GM12878 (cell line): ENCODE measurements at regions of chr15 and their contacts with region 1.

Region 1: GRCh38 chr15:84981054-84981710 is 474 bp upstream of the PDE8A start:
- DNase-seq: peak; percentile 87
- ATAC-seq: peak; percentile 79
- H3K4me3 ChIP-seq: peak overlapping the region; percentile 94
- H3K27ac ChIP-seq: peak overlapping the region; percentile 92
- H3K4me1 ChIP-seq: peaks cover 9% of the 10 kb centered on the region
- H3K27me3 ChIP-seq: no peaks in the 10 kb centered on the region
- CTCF ChIP-seq: no peak
- EP300 ChIP-seq: peak; percentile 58 to 65; a peak in 1 of 4 replicates
- POLR2A ChIP-seq: peak; percentile 77
- RAD21 ChIP-seq: no peak

Region 2: GRCh38 chr15:84947947-84948830 is 33.0 kb before region 1 on chr15:
- CTCF ChIA-PET with region 1: no interaction called
- POLR2A ChIA-PET with region 1: no interaction called
- RAD21 ChIA-PET with region 1: no interaction called
- SMC1A ChIA-PET with region 1: no interaction called
- in situ Hi-C with region 1: no loop called
- intact Hi-C with region 1: no loop called
- DNase-seq: no peak
- ATAC-seq: no peak
- H3K4me3 ChIP-seq: no peak overlapping the region
- H3K27ac ChIP-seq: no peak overlapping the region
- H3K4me1 ChIP-seq: no peaks in the 10 kb centered on the region
- H3K27me3 ChIP-seq: no peaks in the 10 kb centered on the region
- CTCF ChIP-seq: no peak
- EP300 ChIP-seq: no peak
- POLR2A ChIP-seq: no peak
- RAD21 ChIP-seq: no peak

Region 3: DNA sequence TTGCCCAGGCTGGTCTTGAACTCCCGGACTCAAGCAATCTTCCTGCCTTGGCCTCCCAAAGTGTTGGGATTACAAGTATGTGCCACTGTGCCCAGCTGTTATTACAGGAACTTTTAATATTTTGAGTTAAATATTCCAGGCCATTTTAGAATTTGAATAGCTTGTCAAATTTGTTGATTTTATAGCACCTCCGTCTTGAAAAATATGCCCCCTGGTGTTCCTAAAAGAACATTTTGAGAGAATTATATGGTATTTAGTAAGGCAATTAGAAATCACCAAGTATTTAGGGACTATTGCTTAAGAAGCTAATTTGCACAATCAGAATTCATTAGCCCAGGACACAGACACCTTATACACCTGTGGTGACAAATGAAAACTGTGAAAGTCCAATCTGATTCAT is 24.1 kb after region 1 on chr15:
- CTCF ChIA-PET with region 1: interaction called, 4 read pairs
- POLR2A ChIA-PET with region 1: interaction called, 12 read pairs
- RAD21 ChIA-PET with region 1: interaction called, 6 read pairs
- SMC1A ChIA-PET with region 1: interaction called, 13 read pairs
- in situ Hi-C with region 1: no loop called
- intact Hi-C with region 1: no loop called
- DNase-seq: no peak
- ATAC-seq: no peak
- H3K4me3 ChIP-seq: no peak overlapping the region
- H3K27ac ChIP-seq: no peak overlapping the region
- H3K4me1 ChIP-seq: peaks cover 47% of the 10 kb centered on the region
- H3K27me3 ChIP-seq: no peaks in the 10 kb centered on the region
- CTCF ChIP-seq: no peak
- EP300 ChIP-seq: no peak
- POLR2A ChIP-seq: no peak
- RAD21 ChIP-seq: no peak

Region 4: DNA sequence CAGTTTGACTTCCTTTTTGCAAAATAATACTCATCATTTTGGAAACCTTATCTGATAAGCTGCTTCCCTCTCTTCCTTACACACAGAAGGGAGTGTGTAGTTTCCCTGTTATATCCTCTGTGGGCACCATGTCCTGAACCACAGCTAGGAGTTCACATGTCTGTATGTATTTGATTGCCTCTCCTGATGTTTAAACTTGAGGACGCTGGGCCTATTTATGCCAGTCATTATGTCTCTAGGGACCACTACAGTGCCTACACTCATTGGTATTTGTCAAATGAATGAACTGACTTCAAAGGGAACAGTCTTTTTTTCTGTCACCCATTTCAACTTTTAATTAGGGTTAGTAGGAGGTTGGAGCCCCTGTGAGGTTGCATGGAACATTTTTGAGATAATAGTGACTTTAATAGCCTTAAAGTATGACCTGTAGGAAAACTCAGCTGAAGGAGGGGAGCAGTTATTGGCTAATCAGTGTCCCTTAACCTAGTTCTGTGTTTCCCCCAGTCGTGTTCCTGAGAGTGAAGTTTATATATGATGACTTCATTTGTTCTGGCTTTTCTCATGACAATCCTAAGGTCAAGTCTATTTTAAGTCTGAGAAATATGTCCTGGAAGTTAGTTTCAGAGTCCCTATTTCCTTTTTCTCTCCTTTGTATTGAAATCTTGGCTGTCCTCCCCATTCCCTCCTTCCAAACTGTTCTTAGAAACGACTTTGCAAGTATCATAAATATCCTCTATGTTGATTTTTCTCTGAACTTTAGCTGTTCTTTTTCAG is 29.4 kb after region 1 on chr15:
- CTCF ChIA-PET with region 1: interaction called, 4 read pairs
- POLR2A ChIA-PET with region 1: interaction called, 12 read pairs
- RAD21 ChIA-PET with region 1: interaction called, 6 read pairs
- SMC1A ChIA-PET with region 1: interaction called, 17 read pairs
- in situ Hi-C with region 1: no loop called
- intact Hi-C with region 1: no loop called
- DNase-seq: no peak
- ATAC-seq: peak; percentile 70
- H3K4me3 ChIP-seq: no peak overlapping the region
- H3K27ac ChIP-seq: peak overlapping the region; percentile 56
- H3K4me1 ChIP-seq: peaks cover 50% of the 10 kb centered on the region
- H3K27me3 ChIP-seq: no peaks in the 10 kb centered on the region
- CTCF ChIP-seq: no peak
- EP300 ChIP-seq: no peak
- POLR2A ChIP-seq: no peak
- RAD21 ChIP-seq: no peak

Region 5: GRCh38 chr15:85024509-85025214 is 43.5 kb after region 1 on chr15:
- CTCF ChIA-PET with region 1: interaction called, 3 read pairs
- POLR2A ChIA-PET with region 1: interaction called, 4 read pairs
- RAD21 ChIA-PET with region 1: interaction called, 7 read pairs
- SMC1A ChIA-PET with region 1: interaction called, 26 read pairs
- in situ Hi-C with region 1: no loop called
- intact Hi-C with region 1: loop called (anchors 2 kb)
- DNase-seq: no peak
- ATAC-seq: peak; percentile 79
- H3K4me3 ChIP-seq: no peak overlapping the region
- H3K27ac ChIP-seq: peak overlapping the region; percentile 76
- H3K4me1 ChIP-seq: peaks cover 36% of the 10 kb centered on the region
- H3K27me3 ChIP-seq: no peaks in the 10 kb centered on the region
- CTCF ChIP-seq: no peak
- EP300 ChIP-seq: no peak
- POLR2A ChIP-seq: no peak
- RAD21 ChIP-seq: no peak

Region 6: GRCh38 chr15:85030301-85031049 is 49.3 kb after region 1 on chr15:
- CTCF ChIA-PET with region 1: interaction called, 3 read pairs
- POLR2A ChIA-PET with region 1: interaction called, 3 read pairs
- RAD21 ChIA-PET with region 1: interaction called, 7 read pairs
- SMC1A ChIA-PET with region 1: interaction called, 26 read pairs
- in situ Hi-C with region 1: no loop called
- intact Hi-C with region 1: loop called (anchors 2 kb)
- DNase-seq: no peak
- ATAC-seq: peak; percentile 60
- H3K4me3 ChIP-seq: no peak overlapping the region
- H3K27ac ChIP-seq: peak overlapping the region; percentile 29
- H3K4me1 ChIP-seq: peaks cover 25% of the 10 kb centered on the region
- H3K27me3 ChIP-seq: no peaks in the 10 kb centered on the region
- CTCF ChIP-seq: no peak
- EP300 ChIP-seq: no peak
- POLR2A ChIP-seq: no peak
- RAD21 ChIP-seq: no peak

Region 7: DNA sequence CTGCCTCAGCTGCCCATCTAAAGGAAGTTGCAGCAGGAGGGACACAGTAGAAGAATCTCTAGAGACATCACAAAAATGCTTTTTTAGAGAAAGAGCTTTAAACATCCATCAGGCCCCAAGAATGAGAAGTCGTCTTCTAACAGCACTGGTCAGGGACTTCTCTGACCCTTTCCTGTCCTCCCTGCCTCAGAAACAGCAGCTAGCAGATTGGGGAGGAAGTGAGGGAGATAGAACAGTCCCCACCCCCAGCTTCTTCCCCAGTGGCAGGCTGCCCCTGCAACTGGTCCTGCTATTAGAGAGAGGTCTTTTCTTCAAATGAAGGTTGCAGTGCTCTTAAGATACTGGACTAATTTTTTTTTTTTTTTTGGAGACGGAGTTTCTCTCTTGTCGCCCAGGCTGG is 55.5 kb after region 1 on chr15:
- CTCF ChIA-PET with region 1: interaction called, 8 read pairs
- POLR2A ChIA-PET with region 1: interaction called, 5 read pairs
- RAD21 ChIA-PET with region 1: interaction called, 10 read pairs
- SMC1A ChIA-PET with region 1: interaction called, 80 read pairs
- in situ Hi-C with region 1: no loop called
- intact Hi-C with region 1: no loop called
- DNase-seq: no peak
- ATAC-seq: peak; percentile 76
- H3K4me3 ChIP-seq: no peak overlapping the region
- H3K27ac ChIP-seq: no peak overlapping the region
- H3K4me1 ChIP-seq: peaks cover 10% of the 10 kb centered on the region
- H3K27me3 ChIP-seq: no peaks in the 10 kb centered on the region
- CTCF ChIP-seq: no peak
- EP300 ChIP-seq: no peak
- POLR2A ChIP-seq: no peak
- RAD21 ChIP-seq: no peak